Calu3 (cell line): ENCODE measurements at regions of chr1 and their contacts with region 1.

Region 1: DNA sequence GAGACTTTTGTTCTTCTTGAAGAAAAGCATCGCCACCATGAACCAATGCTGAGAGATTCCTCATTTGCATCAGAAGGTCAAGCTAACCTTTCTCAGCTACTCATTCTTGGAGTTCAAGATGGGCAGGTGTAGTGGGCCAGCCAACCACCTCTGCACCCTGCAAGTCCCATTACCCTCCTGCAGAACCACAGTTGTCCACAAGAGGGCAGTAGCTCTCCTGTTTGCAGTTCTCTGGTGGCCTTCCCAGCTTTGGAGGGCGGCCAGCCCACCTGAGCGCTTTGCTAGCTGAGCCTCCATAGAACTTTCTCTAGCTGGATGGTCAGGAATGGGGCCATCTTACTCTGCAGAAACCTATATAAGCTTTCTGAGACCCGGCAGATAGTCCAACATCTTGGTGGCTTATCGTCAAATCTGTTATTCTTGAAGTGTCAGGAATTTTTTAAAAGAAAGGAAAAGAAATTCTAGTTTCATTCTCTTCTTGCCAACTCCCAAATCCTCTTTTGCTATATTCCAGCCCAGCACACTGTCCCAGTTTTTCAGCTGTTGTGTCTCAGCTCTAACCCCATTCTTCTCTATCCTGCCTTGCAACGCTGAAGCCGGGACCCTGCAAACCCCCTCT is 11.0 kb upstream of the LMX1A start:
- DNase-seq: peak; percentile 85
- H3K4me3 Mint-ChIP-seq: no peak overlapping the region
- H3K27ac Mint-ChIP-seq: no peak overlapping the region
- H3K4me1 Mint-ChIP-seq: no peaks in the 10 kb centered on the region
- H3K27me3 Mint-ChIP-seq: peaks cover 82% of the 10 kb centered on the region
- CTCF ChIP-seq: peak; percentile 91

Region 2: GRCh38 chr1:165144757-165145397 is 222.6 kb before region 1 on chr1:
- CTCF ChIA-PET with region 1: interaction called, 9 read pairs
- intact Hi-C with region 1: loop called (anchors 1 kb)
- DNase-seq: peak; percentile 73
- H3K4me3 Mint-ChIP-seq: no peak overlapping the region
- H3K27ac Mint-ChIP-seq: no peak overlapping the region
- H3K4me1 Mint-ChIP-seq: no peaks in the 10 kb centered on the region
- H3K27me3 Mint-ChIP-seq: peaks cover 37% of the 10 kb centered on the region
- CTCF ChIP-seq: peak; percentile 75

Region 3: DNA sequence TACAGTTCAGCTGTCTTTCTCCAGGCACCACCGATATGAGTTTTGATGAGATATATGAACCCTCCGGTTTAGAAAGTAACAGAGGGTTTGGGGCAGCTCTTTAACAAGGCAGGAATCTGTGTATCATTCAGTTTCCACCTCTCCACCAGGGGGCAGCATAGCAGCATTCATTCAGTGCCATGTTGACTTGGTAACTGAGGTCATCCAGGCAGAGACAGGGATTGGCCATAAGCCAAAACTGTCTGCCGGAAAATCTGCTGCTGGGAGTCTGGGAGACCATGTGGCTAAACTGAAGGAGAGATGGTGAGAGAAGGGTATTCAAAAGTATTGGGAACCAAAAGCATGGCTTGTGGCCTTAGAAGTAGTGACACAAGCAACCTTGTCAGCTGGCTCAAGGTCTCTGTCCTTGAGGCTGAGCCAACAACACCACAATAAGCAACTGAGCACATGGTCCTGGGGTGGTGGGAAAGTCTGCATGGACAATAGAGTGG is 109.5 kb before region 1 on chr1:
- CTCF ChIA-PET with region 1: interaction called, 6 read pairs
- intact Hi-C with region 1: loop called (anchors 1 kb)
- DNase-seq: peak; percentile 82
- H3K4me3 Mint-ChIP-seq: no peak overlapping the region
- H3K27ac Mint-ChIP-seq: no peak overlapping the region
- H3K4me1 Mint-ChIP-seq: peaks cover 8% of the 10 kb centered on the region
- H3K27me3 Mint-ChIP-seq: peaks cover 67% of the 10 kb centered on the region
- CTCF ChIP-seq: peak; percentile 64